ENCODE measurements at regions of chr15 and their contacts with region 1.

Region 1: DNA sequence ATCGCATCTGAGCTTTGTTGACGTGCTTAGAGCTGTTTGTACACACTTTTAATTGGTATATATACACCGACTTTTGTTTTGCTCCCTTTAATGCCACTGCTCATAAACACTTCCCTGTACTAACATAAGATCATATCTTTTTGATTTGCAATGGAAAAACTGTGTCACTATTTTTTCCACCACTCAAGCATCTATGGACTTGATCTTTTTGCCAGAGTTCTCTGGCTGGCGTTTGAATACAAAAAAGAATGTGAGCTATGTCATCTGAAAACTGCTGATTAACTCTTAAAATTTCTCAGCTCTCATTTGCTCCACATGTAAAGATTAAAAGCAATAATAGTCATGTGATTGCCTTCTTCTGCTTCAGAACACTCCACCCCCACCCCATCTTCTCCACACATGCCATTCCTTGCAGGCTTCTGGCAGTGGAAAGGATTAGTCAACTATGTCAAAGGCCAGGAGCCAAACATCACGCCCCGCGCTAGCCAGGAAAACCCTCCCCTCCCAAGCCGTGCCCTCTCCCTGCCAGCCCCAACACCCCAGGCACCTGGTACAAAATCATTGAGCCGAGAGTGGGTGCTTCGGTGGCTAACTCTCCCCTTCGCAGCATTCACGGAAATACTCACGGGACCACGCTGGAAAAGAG is 123.4 kb upstream of the MEF2A start:
- DNase-seq: peak; percentile 90
- H3K4me3 Mint-ChIP-seq: peak overlapping the region; percentile 60
- H3K27ac Mint-ChIP-seq: peak overlapping the region; percentile 88
- H3K4me1 Mint-ChIP-seq: peaks cover 28% of the 10 kb centered on the region
- H3K27me3 Mint-ChIP-seq: no peaks in the 10 kb centered on the region
- CTCF ChIP-seq: no peak

Region 2: DNA sequence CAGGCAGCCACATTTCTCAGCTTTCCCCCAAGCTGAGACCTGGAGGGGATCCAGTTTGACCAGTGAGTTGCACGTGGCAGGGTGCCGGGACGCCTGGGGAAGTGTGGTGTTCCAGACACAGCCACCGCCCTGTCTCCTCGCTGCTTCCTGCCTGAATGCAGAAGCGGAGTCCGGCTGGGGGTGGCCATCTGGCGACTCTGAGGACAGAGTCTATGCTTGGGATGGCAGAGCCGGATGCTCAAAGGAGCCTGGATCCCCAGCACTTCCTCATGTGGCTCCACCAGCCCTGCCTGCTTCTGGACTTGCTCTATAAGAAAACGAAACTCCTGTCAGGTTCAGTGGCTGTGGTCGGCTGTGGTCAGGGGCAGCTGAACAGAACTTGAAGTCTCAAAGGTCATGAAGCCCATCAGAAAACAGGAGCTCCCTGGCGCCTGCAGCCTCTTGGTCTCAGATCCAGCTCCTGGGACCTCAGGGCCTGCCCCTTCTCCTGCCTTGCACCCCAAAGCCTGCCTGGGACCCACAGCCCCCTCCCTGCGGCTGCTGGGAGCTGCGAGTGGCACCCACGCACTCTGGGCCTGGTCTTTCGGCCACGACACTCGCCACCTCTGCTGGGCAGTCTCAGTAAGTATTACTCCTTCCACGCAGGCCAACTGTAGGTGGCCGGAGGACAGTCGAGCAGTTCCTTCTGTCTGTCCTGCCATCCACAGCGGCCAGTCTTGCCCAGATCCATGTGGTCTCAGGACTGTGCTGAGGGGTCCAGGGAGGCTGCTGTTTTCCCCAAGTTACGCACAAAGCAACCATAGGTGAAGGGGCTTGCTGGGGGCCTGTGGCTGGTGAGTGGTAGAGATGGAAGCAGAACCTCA is 10.6 kb after region 1 on chr15:
- CTCF ChIA-PET with region 1: no interaction called
- POLR2A ChIA-PET with region 1: interaction called, 36 read pairs
- intact Hi-C with region 1: no loop called
- DNase-seq: peak; percentile 78
- H3K4me3 Mint-ChIP-seq: peak overlapping the region; percentile 25
- H3K27ac Mint-ChIP-seq: peak overlapping the region; percentile 84
- H3K4me1 Mint-ChIP-seq: peaks cover 52% of the 10 kb centered on the region
- H3K27me3 Mint-ChIP-seq: no peaks in the 10 kb centered on the region
- CTCF ChIP-seq: no peak

Measured in MCF 10A (cell line).